CD4-positive, alpha-beta memory T cell (primary cell): ENCODE measurements at regions of chr2 and their contacts with region 1.

Region 1: GRCh38 chr2:239882331-239882732 is 142.8 kb downstream of the NDUFA10 start:
- DNase-seq: peak; percentile 50 to 67 (median 56)
- H3K4me3 ChIP-seq: no peak overlapping the region
- H3K4me3 Mint-ChIP-seq: peak overlapping the region in 1 of 8 donors; percentile 3
- H3K27ac ChIP-seq: no peak overlapping the region
- H3K27ac Mint-ChIP-seq: peak overlapping the region in 2 of 7 donors; percentile 5 to 67
- H3K4me1 ChIP-seq: peaks cover 8% of the 10 kb centered on the region
- H3K4me1 Mint-ChIP-seq: peaks cover 6 to 13% (median 8%) of the 10 kb centered on the region in 4 donors
- H3K27me3 ChIP-seq: no peaks in the 10 kb centered on the region
- H3K27me3 Mint-ChIP-seq: peaks cover 1 to 4% of the 10 kb centered on the region in 2 donors

Region 2: DNA sequence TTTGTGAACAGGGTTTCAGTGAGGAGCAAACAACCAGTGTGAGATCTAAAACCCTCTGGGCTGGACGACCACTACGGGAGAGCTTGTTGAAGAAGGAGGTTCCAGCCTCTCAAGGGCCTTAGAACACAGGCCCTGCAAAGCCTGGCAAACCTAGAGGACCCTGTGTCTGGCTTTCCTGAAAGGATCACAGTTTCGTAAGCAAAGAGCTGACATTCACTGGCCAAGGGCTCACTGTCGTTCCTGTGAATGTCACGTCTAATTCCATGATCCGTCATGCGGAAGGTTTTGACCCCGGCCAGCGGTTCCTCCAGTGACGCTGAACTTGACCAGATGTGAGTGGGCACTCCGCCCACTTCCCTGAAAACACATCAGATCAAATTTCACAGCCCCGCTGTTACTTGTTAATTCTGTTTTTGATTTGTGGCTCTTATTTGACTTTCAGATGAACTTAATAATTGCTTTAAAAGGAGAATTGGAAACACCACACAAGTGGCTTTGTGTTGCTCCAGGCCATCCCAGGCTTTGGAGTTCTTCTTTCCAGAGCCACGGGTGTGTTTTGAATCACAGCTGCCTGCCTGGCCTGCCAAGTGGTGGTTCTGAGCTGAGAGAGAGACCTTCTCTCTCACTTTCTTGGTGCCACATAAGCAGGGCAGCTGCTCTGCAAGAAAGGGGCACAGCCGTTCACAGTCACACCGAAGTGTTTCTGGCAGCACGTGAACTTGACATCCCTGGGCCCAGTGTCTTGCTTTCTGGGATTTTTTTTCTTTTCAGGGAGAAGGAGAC is 165.6 kb before region 1 on chr2:
- CTCF ChIA-PET with region 1: no interaction called
- POLR2A ChIA-PET with region 1: no interaction called
- intact Hi-C with region 1: no loop called
- DNase-seq: no peak
- H3K4me3 ChIP-seq: no peak overlapping the region
- H3K4me3 Mint-ChIP-seq: no peak overlapping the region
- H3K27ac ChIP-seq: no peak overlapping the region
- H3K27ac Mint-ChIP-seq: no peak overlapping the region
- H3K4me1 ChIP-seq: no peaks in the 10 kb centered on the region
- H3K4me1 Mint-ChIP-seq: no peaks in the 10 kb centered on the region
- H3K27me3 ChIP-seq: no peaks in the 10 kb centered on the region
- H3K27me3 Mint-ChIP-seq: peaks cover 4 to 9% of the 10 kb centered on the region in 2 donors

Region 3: DNA sequence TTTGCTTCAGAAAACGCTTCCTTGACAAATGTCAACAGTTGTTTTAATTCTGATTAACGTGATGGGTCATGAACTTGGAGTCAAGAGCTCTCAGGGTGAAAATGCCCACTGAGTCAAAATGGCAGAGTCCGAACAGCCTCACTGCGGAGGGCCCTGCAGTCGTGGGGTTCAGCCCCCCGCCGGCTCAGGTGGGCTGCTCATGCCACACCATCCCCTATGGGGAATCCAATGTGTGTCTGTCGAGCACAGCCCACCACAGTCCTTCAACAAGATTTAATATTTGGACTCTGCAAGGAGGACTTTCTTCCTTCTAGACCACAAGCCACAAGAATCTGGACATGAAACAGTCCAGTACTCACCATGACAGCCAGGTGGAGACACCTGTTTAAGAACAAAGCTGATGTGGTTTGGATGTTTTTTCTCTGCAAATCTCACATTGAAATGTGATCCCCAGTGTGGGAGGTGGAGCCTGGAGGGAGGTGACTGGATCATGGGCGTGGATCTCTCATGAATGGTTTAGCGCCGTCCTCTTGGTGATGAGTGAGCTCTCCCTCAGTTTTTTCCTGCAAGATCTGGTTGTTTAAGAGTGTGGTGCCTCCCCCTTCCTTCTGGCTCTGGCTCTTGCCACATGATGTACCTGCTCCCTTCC is 58.2 kb before region 1 on chr2:
- CTCF ChIA-PET with region 1: interaction called, 17 read pairs
- POLR2A ChIA-PET with region 1: no interaction called
- intact Hi-C with region 1: loop called (anchors 1 kb)
- DNase-seq: no peak
- H3K4me3 ChIP-seq: no peak overlapping the region
- H3K4me3 Mint-ChIP-seq: no peak overlapping the region
- H3K27ac ChIP-seq: no peak overlapping the region
- H3K27ac Mint-ChIP-seq: no peak overlapping the region
- H3K4me1 ChIP-seq: no peaks in the 10 kb centered on the region
- H3K4me1 Mint-ChIP-seq: peaks cover 0 to 4% (median 0%) of the 10 kb centered on the region in 4 donors
- H3K27me3 ChIP-seq: no peaks in the 10 kb centered on the region
- H3K27me3 Mint-ChIP-seq: peaks cover 0 to 4% of the 10 kb centered on the region in 2 donors